ENCODE measurements at regions of chr22 and their contacts with region 1.

Region 1: GRCh38 chr22:25702040-25702439 is 39.9 kb upstream of the MYO18B start:
- DNase-seq: no peak
- ATAC-seq: no peak
- H3K4me3 Mint-ChIP-seq: no peak overlapping the region
- H3K27ac Mint-ChIP-seq: no peak overlapping the region
- H3K4me1 Mint-ChIP-seq: peaks cover 13% of the 10 kb centered on the region
- H3K27me3 Mint-ChIP-seq: no peaks in the 10 kb centered on the region

Region 2: GRCh38 chr22:25623310-25623734 is 78.7 kb before region 1 on chr22:
- CTCF ChIA-PET with region 1: no interaction called
- POLR2A ChIA-PET with region 1: no interaction called
- intact Hi-C with region 1: loop called in 1 of 2 experiments (anchors 2 kb)
- DNase-seq: peak; percentile 41
- ATAC-seq: peak; percentile 93
- H3K4me3 Mint-ChIP-seq: no peak overlapping the region
- H3K27ac Mint-ChIP-seq: no peak overlapping the region
- H3K4me1 Mint-ChIP-seq: peaks cover 23% of the 10 kb centered on the region
- H3K27me3 Mint-ChIP-seq: peaks cover 2% of the 10 kb centered on the region

Region 3: GRCh38 chr22:25666308-25666707 is 35.7 kb before region 1 on chr22:
- CTCF ChIA-PET with region 1: no interaction called
- POLR2A ChIA-PET with region 1: no interaction called
- intact Hi-C with region 1: no loop called
- DNase-seq: no peak
- ATAC-seq: no peak
- H3K4me3 Mint-ChIP-seq: no peak overlapping the region
- H3K27ac Mint-ChIP-seq: no peak overlapping the region
- H3K4me1 Mint-ChIP-seq: peaks cover 3% of the 10 kb centered on the region
- H3K27me3 Mint-ChIP-seq: no peaks in the 10 kb centered on the region

Region 4: DNA sequence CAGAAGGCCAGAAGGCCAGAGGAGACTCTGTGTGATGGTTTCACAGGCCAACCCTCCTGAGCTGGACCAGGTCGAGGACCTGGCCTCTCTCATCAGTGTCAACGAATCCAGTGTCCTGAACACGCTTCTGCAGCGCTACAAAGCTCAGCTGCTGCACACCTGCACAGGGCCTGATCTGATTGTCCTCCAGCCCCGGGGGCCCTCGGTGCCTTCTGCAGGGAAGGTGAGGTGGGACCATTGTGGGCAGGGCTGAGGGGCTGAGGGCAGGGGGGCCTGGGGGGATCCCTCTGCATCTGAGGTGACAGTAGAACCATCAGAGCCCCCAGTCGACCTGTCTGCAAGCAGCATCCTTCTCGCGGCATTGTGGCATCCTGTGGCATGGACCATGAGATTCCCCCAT is 70.2 kb after region 1 on chr22:
- CTCF ChIA-PET with region 1: interaction called, 3 read pairs
- POLR2A ChIA-PET with region 1: no interaction called
- intact Hi-C with region 1: loop called in 1 of 2 experiments (anchors 2 kb)
- DNase-seq: no peak
- ATAC-seq: no peak
- H3K4me3 Mint-ChIP-seq: no peak overlapping the region
- H3K27ac Mint-ChIP-seq: no peak overlapping the region
- H3K4me1 Mint-ChIP-seq: peaks cover 12% of the 10 kb centered on the region
- H3K27me3 Mint-ChIP-seq: peaks cover 2% of the 10 kb centered on the region

Measured in activated CD4-positive, alpha-beta T cell treated with anti-CD3 and anti-CD28 coated beads for 36 hours (primary cell).